Activated CD8-positive, alpha-beta memory T cell treated with anti-CD3 and anti-CD28 coated beads, Interleukin-2, amount 10 ng/mL, durations not matched to agents 7 days and 5 days (primary cell): ENCODE measurements at regions of chr7 and their contacts with region 1.

Region 1: DNA sequence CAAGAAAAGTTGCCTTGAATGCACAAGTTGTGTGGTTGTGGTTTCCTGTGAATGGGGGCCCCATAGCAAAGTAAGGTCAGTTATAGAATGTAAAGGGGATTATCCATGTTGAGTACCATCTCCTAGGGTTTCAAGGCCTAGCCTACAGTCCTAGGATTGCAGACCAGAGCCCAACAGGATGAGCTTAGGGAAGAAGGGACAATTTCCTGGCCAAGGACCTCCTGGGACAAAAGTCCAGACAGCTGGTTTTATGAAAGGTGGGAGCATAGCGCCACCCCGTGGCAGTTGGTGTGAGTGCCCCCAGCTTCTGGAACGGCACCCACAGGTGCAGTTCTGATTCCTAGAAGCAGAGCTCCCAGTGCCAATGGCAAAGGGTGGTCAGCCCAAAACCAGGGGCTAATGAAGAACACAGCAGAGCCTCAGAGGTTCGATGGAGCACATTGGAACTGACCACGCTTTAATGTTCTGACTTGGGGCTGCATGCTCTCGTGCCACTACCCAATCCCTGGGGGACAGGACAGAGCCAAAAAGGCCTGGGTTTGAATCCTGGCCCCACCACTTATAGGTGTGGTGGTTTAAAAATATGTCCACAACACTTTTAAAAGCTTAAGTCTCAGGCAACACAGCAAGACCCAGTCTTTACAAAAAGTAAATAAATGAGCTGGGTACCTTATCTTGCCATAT is 25.8 kb upstream of the TMEM120A start:
- DNase-seq: peak; percentile 79
- ATAC-seq: peak; percentile 85
- H3K4me3 Mint-ChIP-seq: no peak overlapping the region
- H3K27ac Mint-ChIP-seq: peak overlapping the region; percentile 79
- H3K4me1 Mint-ChIP-seq: peaks cover 21% of the 10 kb centered on the region
- H3K27me3 Mint-ChIP-seq: no peaks in the 10 kb centered on the region

Region 2: DNA sequence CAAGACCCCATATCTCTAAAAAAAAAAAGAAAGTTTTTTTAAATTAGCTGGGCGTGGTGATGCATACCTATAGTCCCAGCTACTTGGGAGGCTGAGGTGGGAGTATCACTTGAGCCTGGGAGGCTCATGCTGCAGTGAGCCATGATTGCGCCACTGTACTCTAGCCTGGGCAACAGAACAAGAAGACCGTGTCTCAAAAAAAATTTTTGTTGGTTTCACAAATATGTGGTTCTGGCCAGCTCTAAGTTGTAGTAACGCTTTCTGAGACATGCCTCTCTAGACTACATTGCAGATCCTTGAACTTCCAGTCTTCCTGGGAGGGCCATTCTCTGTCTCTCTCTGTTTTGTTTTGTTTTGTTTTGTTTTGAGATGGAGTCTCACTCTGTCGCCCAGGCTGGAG is 165.9 kb before region 1 on chr7:
- CTCF ChIA-PET with region 1: no interaction called
- DNase-seq: no peak
- ATAC-seq: no peak
- H3K4me3 Mint-ChIP-seq: no peak overlapping the region
- H3K27ac Mint-ChIP-seq: no peak overlapping the region
- H3K4me1 Mint-ChIP-seq: peaks cover 9% of the 10 kb centered on the region
- H3K27me3 Mint-ChIP-seq: peaks cover 4% of the 10 kb centered on the region

Region 3: GRCh38 chr7:75866489-75867389 is 153.4 kb before region 1 on chr7:
- CTCF ChIA-PET with region 1: interaction called, 75 read pairs
- DNase-seq: peak; percentile 67
- ATAC-seq: peak; percentile 84
- H3K4me3 Mint-ChIP-seq: no peak overlapping the region
- H3K27ac Mint-ChIP-seq: no peak overlapping the region
- H3K4me1 Mint-ChIP-seq: peaks cover 20% of the 10 kb centered on the region
- H3K27me3 Mint-ChIP-seq: peaks cover 6% of the 10 kb centered on the region

Region 4: GRCh38 chr7:75878769-75879611 is 141.2 kb before region 1 on chr7 and contains the start of gene RHBDD2:
- CTCF ChIA-PET with region 1: interaction called, 23 read pairs
- DNase-seq: peak; percentile 97
- ATAC-seq: peak; percentile 95
- H3K4me3 Mint-ChIP-seq: peak within 1 kb of the TSS; percentile 98
- H3K27ac Mint-ChIP-seq: peak within 1 kb of the TSS; percentile 93
- H3K4me1 Mint-ChIP-seq: peaks cover 17% of the 10 kb centered on the region
- H3K27me3 Mint-ChIP-seq: no peaks in the 10 kb centered on the region
- total RNA-seq, gene RHBDD2: 25.4 to 48.0 TPM

Region 5: DNA sequence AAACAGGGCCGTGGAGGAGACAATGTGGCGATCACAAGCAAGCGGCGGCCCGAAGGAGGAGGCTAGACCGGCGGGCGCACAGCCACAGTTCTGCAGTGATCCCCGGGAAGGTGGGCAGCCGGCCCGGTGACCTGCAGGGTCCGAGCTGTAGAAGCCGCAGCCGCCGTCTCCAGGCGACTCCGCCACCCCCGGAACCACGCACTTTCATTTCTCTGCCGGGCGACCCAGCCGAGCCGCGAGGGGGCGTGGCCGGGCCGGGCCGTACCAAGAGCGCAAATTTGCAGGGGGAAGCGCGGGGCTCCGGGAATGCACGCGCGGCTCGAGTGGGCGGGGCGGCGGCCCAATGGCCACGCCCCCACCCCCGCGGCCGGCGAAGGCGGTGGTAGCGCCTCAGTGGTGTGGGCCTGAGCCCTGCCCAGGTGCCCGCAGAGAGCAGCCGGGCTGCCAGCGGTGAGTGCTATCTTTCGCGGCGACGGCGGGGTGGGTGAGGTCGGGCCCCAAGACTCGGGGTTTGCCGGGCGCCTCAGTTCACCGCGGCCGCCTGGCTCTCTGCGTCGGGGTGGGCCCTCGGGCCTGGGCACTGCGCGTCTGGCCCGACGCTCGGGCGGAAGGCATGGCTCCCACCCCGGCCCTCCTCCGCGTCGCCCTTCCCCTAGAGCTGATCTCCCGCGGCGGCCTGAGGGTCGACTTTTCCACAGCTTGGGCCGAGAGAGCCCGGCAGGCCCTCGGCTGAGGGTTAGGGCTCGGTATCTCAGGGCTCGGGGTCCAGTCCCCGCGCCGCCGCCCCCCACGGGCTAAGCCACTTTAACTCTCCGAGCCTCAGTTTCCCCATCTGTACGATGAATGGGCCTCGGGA is 105.2 kb before region 1 on chr7 and contains the start of gene POR:
- CTCF ChIA-PET with region 1: interaction called, 31 read pairs
- DNase-seq: peak; percentile 95
- ATAC-seq: peak; percentile 97
- H3K4me3 Mint-ChIP-seq: peak within 1 kb of the TSS; percentile 88
- H3K27ac Mint-ChIP-seq: peak within 1 kb of the TSS; percentile 92
- H3K4me1 Mint-ChIP-seq: peaks cover 19% of the 10 kb centered on the region
- H3K27me3 Mint-ChIP-seq: no peaks in the 10 kb centered on the region
- total RNA-seq, gene POR: 52.0 to 57.6 TPM

Region 6: DNA sequence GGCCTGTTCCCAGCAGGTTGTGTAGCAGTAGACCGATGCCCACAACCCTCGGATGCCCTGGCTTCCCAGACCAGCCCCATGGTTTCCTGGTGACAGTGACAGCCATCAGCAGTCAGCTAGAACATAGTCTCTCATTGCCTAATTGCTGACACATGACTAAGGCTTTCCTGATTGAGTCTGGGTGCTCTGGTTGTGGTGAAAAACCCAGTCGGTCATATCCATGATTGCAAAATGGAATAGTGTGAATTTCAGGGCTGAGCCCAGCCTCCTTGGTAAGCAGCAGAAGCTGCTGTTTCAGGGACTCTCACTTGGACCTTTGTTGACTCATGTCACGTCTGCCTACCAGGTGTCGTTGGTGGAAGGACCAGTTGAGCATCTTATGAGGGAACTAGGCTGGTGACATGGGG is 68.7 kb before region 1 on chr7:
- CTCF ChIA-PET with region 1: no interaction called
- DNase-seq: no peak
- ATAC-seq: no peak
- H3K4me3 Mint-ChIP-seq: no peak overlapping the region
- H3K27ac Mint-ChIP-seq: no peak overlapping the region
- H3K4me1 Mint-ChIP-seq: no peaks in the 10 kb centered on the region
- H3K27me3 Mint-ChIP-seq: no peaks in the 10 kb centered on the region

Region 7: DNA sequence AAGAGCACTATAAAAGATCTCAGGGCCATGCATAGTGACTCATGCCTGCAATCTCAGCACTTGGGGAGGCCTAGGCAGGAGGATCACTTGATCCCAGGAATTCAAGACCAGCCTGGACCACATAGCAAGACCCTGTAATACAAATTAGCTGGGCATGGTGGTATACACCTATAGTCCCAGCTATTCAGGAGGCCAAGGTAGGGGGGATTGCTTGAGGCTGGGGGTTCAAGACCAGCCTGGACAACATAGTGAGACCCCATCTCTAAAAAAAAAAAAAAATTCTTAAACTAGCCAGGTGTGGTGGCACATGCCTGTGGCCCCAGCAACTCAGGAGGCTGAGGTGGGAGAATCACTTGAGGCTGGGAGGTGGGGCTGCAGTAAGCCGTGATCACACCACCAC is 11.8 kb after region 1 on chr7:
- CTCF ChIA-PET with region 1: interaction called, 16 read pairs
- DNase-seq: no peak
- ATAC-seq: no peak
- H3K4me3 Mint-ChIP-seq: no peak overlapping the region
- H3K27ac Mint-ChIP-seq: no peak overlapping the region
- H3K4me1 Mint-ChIP-seq: peaks cover 6% of the 10 kb centered on the region
- H3K27me3 Mint-ChIP-seq: no peaks in the 10 kb centered on the region

Region 8: DNA sequence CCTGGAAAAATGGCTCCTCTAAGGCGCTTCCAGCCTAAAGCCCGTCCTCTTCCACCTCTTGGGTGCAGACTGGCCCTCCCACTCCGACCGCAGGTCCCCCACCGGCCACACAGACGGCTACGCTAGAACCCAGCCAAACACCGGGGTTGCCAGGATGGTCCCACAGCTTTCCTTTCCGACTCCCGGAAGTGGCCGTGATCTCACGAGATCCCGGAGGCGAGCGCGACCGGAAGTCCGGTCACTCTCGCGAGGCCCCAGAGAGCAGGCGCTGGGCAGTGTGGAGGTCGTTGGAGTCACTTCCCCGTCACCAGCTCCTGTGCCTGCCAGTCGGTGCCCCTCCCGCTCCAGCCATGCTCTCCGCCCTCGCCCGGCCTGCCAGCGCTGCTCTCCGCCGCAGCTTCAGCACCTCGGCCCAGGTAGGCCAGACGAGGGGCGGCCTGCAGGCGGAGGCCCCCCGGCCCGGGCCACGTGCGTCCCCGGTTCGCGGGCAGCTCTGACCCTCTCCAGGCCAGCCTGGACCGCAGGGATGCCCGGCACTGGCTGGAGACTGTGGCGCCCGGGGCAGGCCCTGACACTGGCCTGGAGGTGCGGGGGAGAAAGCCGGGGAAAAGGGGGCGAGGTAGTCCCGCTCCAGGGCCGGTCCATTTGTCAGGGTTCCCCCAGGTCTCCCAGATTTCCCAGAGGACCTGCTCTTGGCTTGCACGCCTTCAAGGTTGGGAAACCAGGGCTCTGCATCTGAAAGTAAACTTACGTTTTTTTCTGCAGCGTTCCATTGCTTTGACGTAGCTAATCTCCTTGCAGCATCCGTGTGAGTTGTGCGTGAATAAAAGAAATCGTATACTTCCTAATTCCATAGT is 27.9 kb after region 1 on chr7 and contains the starts of genes MDH2 and STYXL1:
- CTCF ChIA-PET with region 1: interaction called, 10 read pairs
- DNase-seq: peak; percentile 96
- ATAC-seq: peak; percentile 92
- H3K4me3 Mint-ChIP-seq: peak within 1 kb of the TSS; percentile 99
- H3K27ac Mint-ChIP-seq: peak within 1 kb of the TSS; percentile 96
- H3K4me1 Mint-ChIP-seq: peaks cover 53% of the 10 kb centered on the region
- H3K27me3 Mint-ChIP-seq: no peaks in the 10 kb centered on the region
- total RNA-seq, gene MDH2: 186 to 230 TPM
- total RNA-seq, gene STYXL1: 42.6 to 43.6 TPM